Heart left ventricle (tissue), 16 donors: ENCODE measurements at regions of chr1 and their contacts with region 1.

Region 1: GRCh38 chr1:29124366-29125236 is 898 bp upstream of the TMEM200B start:
- DNase-seq: peak; percentile 82 to 90 (median 87)
- ATAC-seq: peak; percentile 58 to 81 (median 78)
- H3K4me3 ChIP-seq: peak overlapping the region; percentile 56 to 90 (median 77)
- H3K27ac ChIP-seq: peak overlapping the region; percentile 84 to 99 (median 94)
- H3K4me1 ChIP-seq: peaks cover 0 to 40% (median 18%) of the 10 kb centered on the region in 12 donors
- H3K27me3 ChIP-seq: peaks cover 0 to 57% (median 18%) of the 10 kb centered on the region in 9 donors
- CTCF ChIP-seq: peak; percentile 24 to 77 (median 70)
- POLR2A ChIP-seq: peak in 1 of 2 donors; percentile 42

Region 2: GRCh38 chr1:28775121-28775944 is 349.3 kb before region 1 on chr1:
- intact Hi-C with region 1: loop called in 1 of 10 experiments (anchors 10 kb)
- DNase-seq: peak; percentile 79 to 89 (median 85)
- ATAC-seq: peak; percentile 72 to 97 (median 96)
- H3K4me3 ChIP-seq: peak overlapping the region in 11 of 12 donors; percentile 13 to 61 (median 49)
- H3K27ac ChIP-seq: peak overlapping the region in 5 of 12 donors; percentile 2 to 34 (median 21)
- H3K4me1 ChIP-seq: peaks cover 0 to 17% (median 6%) of the 10 kb centered on the region in 12 donors
- H3K27me3 ChIP-seq: no peaks in the 10 kb centered on the region
- CTCF ChIP-seq: peak in 2 of 12 donors; percentile 3 to 11
- POLR2A ChIP-seq: no peak

Region 3: DNA sequence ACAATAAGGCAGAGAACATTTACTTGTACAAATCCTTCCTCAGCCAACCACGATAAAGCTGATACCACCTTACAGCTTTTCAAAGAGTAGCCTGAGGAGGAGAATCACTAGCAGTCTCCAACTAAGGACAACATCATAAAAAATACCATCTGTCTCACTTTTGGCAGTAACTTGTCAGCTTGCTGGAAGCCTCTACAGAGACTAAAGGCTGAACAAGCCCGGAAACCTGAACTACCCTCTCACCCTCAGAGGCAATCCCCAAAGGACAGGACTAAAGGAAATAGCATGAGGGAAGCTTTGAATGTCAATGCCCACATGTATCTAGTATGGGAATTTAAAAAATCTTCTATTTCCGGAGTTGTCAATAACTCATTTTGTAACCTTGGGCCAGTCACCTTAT is 46.5 kb after region 1 on chr1:
- intact Hi-C with region 1: loop called in 1 of 10 experiments (anchors 10 kb)
- DNase-seq: no peak
- ATAC-seq: peak in 2 of 4 donors; percentile 22
- H3K4me3 ChIP-seq: no peak overlapping the region
- H3K27ac ChIP-seq: peak overlapping the region in 1 of 12 donors; percentile 13
- H3K4me1 ChIP-seq: peaks cover 2 to 62% (median 43%) of the 10 kb centered on the region in 12 donors
- H3K27me3 ChIP-seq: no peaks in the 10 kb centered on the region
- CTCF ChIP-seq: no peak
- POLR2A ChIP-seq: no peak

Region 4: DNA sequence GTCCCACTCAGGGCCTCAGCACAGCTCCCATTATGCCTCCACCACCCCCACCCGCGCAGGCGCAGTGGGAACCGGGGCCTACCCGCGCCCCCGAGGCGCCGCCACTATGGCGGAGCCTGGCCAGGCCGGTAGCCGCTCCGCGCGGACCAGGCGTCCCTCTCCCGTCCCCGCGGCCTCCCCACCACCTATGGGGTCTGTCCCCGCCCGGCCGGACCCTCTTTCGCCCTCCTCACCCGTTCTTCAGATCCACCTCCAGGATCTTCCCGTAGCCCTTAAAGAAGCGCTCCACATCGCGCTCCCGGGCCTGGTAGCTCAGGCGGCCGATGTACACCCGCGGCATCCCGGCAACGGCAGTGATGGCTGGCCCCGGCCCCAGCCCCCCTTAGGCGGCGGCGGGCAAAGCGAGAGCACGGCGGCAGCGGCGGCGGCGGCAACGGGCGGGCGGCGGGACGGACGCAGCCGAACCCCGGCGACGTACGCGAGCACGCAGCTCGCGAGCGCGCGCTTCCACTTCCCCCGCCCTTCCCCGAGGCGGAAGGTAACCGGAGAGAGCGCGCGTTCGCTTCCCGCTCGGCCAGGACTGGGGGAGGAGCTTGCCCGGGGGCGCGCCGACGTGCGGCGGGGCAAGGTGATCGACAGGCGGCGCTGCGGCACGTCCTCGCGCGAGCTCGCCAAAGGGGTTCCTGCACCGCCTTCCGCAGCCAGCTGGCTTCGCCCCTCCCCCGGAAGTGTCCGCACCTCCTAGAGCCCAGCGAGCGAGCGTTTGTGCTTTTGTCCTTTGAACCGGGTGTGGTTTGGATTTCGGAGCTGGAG is 57.0 kb after region 1 on chr1 and contains the start of gene SRSF4:
- intact Hi-C with region 1: loop called in 5 of 10 experiments (anchors 2 to 10 kb)
- DNase-seq: peak; percentile 99 to 100 (median 99)
- ATAC-seq: peak; percentile 92 to 97 (median 96)
- H3K4me3 ChIP-seq: peak within 1 kb of the TSS; percentile 74 to 100 (median 98)
- H3K27ac ChIP-seq: peak within 1 kb of the TSS; percentile 85 to 100 (median 100)
- H3K4me1 ChIP-seq: peaks cover 11 to 51% (median 45%) of the 10 kb centered on the region in 12 donors
- H3K27me3 ChIP-seq: no peaks in the 10 kb centered on the region
- CTCF ChIP-seq: peak; percentile 57 to 96 (median 84)
- POLR2A ChIP-seq: peak in 1 of 2 donors; percentile 87
- total RNA-seq, gene SRSF4: 40.4 to 54.6 (median 49.0) TPM